Posterior cingulate gyrus (tissue), 11 donors: ENCODE measurements at regions of chr7 and their contacts with region 1.

Region 1: DNA sequence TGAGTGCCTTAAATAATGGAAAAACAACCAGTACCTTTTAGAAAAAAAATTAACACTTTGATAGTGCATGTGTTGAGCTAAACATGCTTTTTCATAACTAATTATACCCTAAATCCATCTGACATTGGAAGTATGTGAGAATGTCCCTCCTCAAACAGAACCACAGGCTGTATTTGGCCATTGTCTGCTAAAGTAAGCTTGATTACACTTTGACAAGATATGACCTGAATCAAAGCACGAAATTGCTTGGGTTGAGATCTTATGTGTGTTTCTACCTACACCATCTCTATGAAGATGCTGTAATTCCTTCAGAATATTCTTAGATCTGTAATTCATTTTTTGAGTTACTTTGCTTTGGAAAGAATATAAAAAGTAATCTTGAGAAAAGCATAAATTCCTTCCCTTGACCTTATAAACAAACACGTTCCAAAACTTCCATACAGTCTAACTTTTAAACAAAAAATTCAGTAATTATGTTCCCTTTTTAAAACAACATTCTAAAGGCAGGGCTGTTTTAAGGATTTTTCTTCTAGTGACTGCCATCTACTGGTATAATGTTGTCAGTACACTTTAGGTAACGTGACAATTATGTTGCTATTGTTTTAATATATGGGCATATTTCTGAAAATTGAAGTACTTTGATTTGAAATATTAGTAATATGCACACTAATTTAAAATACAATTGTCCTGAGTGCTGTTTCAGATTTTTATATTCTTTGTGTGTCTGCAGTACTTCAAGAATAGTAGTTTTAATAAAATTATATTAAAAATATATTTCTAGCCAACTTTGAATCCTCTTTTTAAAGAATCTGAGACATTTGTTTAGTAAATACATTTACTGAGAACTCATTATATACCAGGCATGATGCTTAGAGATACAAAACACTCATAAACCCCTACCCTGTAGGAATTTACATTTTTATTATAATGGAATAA is 20.9 kb downstream of the CD36 start:
- DNase-seq: no peak

Region 2: GRCh38 chr7:80053124-80053523 is 606.3 kb before region 1 on chr7:
- intact Hi-C with region 1: loop called (anchors 10 kb)
- DNase-seq: no peak

Region 3: GRCh38 chr7:80428161-80429054 is 231.0 kb before region 1 on chr7:
- intact Hi-C with region 1: loop called (anchors 2 kb)
- DNase-seq: no peak